Activated T-helper 1 cell treated with anti-CD3 and anti-CD28 coated beads, Interleukin-12 subunit alpha, Interleukin-12 subunit beta, Interleukin-2, Interleukin-4 antibody, amounts not matched to agents 30 ng/mL and 10 ng/mL and 1 ng/mL, durations not matched to agents 14 hours and 24 hours and 36 hours (primary cell): ENCODE measurements at regions of chr17 and their contacts with region 1.

Region 1: DNA sequence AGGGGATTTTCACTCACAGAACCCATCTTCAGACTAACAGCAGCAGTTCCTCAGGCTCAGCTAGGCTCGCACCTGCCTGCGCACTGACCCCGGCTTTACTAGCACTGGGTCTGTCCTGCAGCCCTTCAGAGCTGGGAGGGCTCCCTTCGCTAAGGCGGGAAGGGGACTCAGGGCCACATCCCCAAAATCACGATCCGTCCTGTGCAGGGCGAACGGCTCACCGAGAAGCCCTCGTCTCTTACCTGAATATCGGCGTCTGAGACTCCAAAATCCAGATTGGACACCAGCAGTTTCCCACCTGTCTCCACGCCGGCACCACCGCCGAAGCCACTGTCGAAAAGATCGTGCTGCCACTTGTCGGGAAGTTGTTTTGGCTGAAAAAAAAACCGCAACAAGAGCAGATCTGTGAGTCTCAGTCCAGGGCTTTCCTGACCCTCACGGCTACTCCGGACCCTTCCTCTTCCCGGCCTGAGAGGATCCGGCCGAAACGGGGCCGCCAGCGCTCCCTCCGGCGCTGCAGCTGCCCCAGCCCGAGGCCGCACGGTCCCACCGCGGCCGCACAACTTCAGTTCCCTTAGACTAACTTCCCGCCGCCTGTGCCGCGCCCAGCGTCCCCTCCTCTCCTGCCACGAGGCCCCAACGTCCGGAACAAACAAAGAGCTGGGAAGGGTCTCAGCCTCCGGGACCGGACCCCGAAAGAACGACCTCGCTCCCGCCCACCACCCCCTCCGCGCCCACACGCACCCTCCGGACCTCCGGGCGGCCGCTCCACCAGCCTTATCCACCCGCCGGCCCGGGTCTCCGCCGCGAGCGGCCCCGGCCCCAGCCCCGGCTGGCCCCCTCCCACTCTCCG is 713 bp downstream of the ALYREF start:
- DNase-seq: peak; percentile 29
- H3K4me3 Mint-ChIP-seq: peak overlapping the region; percentile 92
- H3K27ac Mint-ChIP-seq: peak overlapping the region; percentile 87
- H3K4me1 Mint-ChIP-seq: peaks cover 13% of the 10 kb centered on the region
- H3K27me3 Mint-ChIP-seq: no peaks in the 10 kb centered on the region

Region 2: DNA sequence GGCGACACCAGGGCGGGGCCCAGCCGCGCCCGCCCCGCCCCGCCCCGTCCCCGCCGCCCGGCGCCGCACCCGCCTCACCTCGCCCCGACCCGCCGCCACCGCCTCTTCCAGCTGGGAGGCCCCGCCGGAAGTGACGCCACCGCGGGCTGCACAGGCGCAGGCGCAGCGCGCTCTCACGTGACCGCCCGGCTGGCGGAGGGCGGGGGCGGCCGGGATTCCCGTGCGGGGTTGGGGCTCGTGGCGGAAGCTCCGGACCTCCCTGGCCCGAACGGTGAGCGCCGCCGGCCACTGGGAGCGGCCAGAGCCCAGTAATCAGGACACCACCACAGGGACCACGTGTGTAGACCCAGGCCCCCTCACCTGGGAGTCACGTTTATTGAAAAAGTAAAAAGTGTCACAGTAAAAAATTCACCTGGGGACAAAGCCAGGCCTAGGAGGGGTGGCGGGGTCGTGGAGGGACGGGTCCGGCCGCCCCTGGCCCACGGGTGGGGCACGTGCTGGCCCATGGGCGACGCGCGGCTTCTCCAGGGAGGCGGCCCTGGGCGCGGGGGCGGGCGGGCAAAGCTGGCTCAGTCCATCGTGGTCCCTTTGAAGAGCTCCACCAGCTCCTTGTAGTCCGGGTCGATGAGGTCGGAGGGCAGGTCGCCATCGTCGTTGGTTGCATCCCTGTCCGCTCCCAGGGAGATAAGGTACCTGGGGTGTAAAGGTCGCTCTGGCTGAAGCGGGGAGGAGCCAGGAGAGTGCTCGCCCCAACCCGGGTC is 57.3 kb before region 1 on chr17 and contains the start of gene MCRIP1:
- intact Hi-C with region 1: loop called (anchors 1 kb)
- DNase-seq: peak; percentile 95
- H3K4me3 Mint-ChIP-seq: peak within 1 kb of the TSS; percentile 93
- H3K27ac Mint-ChIP-seq: peak within 1 kb of the TSS; percentile 92
- H3K4me1 Mint-ChIP-seq: peaks cover 16% of the 10 kb centered on the region
- H3K27me3 Mint-ChIP-seq: no peaks in the 10 kb centered on the region
- total RNA-seq, gene MCRIP1: 56.0 and 62.3 TPM in 2 replicates

Region 3: GRCh38 chr17:81871387-81872230 is 19.1 kb before region 1 on chr17:
- intact Hi-C with region 1: loop called (anchors 1 kb)
- DNase-seq: peak; percentile 96
- H3K4me3 Mint-ChIP-seq: peak overlapping the region; percentile 84
- H3K27ac Mint-ChIP-seq: peak overlapping the region; percentile 90
- H3K4me1 Mint-ChIP-seq: peaks cover 7% of the 10 kb centered on the region
- H3K27me3 Mint-ChIP-seq: no peaks in the 10 kb centered on the region

Region 4: GRCh38 chr17:81911277-81911961 is 20.7 kb after region 1 on chr17 and contains the start of gene PCYT2:
- intact Hi-C with region 1: loop called (anchors 2 kb)
- DNase-seq: peak; percentile 91
- H3K4me3 Mint-ChIP-seq: peak within 1 kb of the TSS; percentile 88
- H3K27ac Mint-ChIP-seq: peak within 1 kb of the TSS; percentile 61
- H3K4me1 Mint-ChIP-seq: peaks cover 26% of the 10 kb centered on the region
- H3K27me3 Mint-ChIP-seq: no peaks in the 10 kb centered on the region
- total RNA-seq, gene PCYT2: 49.5 and 54.5 TPM in 2 replicates

Region 5: GRCh38 chr17:81917565-81918332 is 27.1 kb after region 1 on chr17 and contains the start of gene SIRT7:
- intact Hi-C with region 1: loop called (anchors 1 kb)
- DNase-seq: peak; percentile 72
- H3K4me3 Mint-ChIP-seq: peak within 1 kb of the TSS; percentile 90
- H3K27ac Mint-ChIP-seq: peak within 1 kb of the TSS; percentile 87
- H3K4me1 Mint-ChIP-seq: peaks cover 37% of the 10 kb centered on the region
- H3K27me3 Mint-ChIP-seq: no peaks in the 10 kb centered on the region
- total RNA-seq, gene SIRT7: 53.2 and 57.5 TPM in 2 replicates

Region 6: DNA sequence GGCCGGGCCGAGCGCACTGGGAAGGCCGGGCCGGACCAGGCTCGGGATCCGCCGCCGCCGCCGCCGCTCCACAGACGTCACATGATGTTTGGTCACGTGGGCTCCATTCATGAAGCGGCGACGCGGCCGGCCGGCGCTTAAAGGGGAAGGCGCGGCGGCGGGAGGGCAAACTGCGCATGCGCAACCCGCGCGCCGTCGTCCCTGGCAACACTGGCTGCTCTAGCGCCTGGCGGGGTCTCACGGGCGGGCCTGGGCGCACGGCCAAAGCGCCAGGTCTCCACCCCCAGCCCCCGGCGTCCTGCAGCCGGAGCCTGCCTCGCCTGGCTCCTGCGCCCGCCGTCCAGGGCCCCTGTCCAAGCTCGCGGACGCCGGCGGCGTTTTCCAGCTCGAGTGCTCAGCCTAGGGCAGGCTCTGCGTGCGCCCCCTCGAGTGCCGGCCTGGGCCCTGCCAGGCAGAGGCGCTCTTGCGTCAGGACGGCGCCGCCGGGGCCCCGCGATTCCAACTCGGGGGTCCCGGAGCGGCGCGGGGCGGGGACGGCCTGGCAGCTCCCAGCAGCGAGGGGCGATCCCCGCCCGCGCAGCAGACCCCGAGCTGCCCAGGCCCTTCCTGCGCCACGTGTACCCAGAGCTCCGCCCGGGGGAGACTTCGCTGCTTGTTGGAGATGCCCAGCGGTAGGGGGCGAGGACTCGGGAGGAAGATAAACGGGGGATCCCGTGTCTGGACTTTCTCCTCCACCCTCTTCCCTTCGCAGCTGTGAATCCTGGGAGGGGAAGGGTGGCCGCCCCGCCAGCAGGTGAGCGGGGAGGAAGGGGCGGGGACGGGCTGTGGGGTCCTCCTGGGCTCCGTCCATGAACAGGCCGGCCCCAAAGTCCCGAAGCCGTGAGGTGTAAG is 37.2 kb after region 1 on chr17 and contains the start of gene MAFG:
- intact Hi-C with region 1: no loop called
- DNase-seq: peak; percentile 88
- H3K4me3 Mint-ChIP-seq: peak within 1 kb of the TSS; percentile 89
- H3K27ac Mint-ChIP-seq: peak within 1 kb of the TSS; percentile 79
- H3K4me1 Mint-ChIP-seq: peaks cover 15% of the 10 kb centered on the region
- H3K27me3 Mint-ChIP-seq: peaks cover 2% of the 10 kb centered on the region
- total RNA-seq, gene MAFG: 33.8 and 35.5 TPM in 2 replicates

Region 7: GRCh38 chr17:81941790-81942553 is 51.3 kb after region 1 on chr17:
- intact Hi-C with region 1: loop called (anchors 1 kb)
- DNase-seq: no peak
- H3K4me3 Mint-ChIP-seq: no peak overlapping the region
- H3K27ac Mint-ChIP-seq: no peak overlapping the region
- H3K4me1 Mint-ChIP-seq: peaks cover 5% of the 10 kb centered on the region
- H3K27me3 Mint-ChIP-seq: peaks cover 8% of the 10 kb centered on the region

Region 8: DNA sequence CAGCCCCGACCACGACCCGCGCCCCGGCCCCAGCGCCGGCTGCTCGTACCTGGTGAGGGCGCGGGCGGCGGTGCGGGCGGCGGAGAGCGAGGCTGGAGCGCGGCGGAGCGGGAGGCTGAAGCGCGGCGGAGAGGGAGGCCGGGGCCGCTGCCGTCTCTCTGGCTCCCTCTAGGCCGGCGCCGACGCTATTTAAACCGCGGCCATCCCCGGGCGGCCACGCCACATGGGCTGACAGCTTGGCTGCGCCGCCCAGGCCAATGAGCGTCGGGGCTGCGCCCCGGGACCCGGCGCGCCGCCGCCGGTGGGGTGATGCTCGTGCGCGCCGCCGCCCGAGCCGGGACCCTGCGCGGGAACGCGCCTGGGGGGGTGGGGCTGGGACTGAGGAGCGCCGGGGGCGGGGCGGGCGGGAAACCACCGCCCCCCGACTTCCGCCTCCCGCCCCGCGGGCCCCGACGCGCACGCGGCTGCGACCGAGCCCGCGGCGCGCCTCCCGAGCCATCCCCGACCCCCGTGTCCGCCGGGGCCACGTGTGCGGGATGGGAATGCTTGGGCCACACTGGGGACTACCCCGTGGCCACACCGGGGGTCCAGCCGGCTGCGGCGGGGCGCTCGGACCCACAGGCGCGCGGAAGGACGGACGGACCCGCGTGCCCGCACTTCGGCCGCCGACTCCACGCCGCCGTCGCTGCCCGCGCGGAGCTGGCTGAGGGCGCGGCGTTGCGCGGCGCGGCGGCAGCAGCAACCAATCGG is 207.6 kb after region 1 on chr17 and contains the start of gene FASN:
- intact Hi-C with region 1: loop called (anchors 1 kb)
- DNase-seq: peak; percentile 90
- H3K4me3 Mint-ChIP-seq: peak within 1 kb of the TSS; percentile 82
- H3K27ac Mint-ChIP-seq: peak within 1 kb of the TSS; percentile 72
- H3K4me1 Mint-ChIP-seq: no peaks in the 10 kb centered on the region
- H3K27me3 Mint-ChIP-seq: no peaks in the 10 kb centered on the region
- total RNA-seq, gene FASN: 415 and 421 TPM in 2 replicates